ENCODE measurements at regions of chr21 and their contacts with region 1.

Region 1: GRCh38 chr21:26170471-26171257 is at the start of gene APP:
- DNase-seq: peak; percentile 90
- ATAC-seq: peak; percentile 91 to 94
- total RNA-seq, gene APP: 385 to 445 TPM

Region 2: GRCh38 chr21:25298512-25299491 is 871.9 kb before region 1 on chr21:
- intact Hi-C with region 1: no loop called
- DNase-seq: no peak
- ATAC-seq: no peak

Region 3: DNA sequence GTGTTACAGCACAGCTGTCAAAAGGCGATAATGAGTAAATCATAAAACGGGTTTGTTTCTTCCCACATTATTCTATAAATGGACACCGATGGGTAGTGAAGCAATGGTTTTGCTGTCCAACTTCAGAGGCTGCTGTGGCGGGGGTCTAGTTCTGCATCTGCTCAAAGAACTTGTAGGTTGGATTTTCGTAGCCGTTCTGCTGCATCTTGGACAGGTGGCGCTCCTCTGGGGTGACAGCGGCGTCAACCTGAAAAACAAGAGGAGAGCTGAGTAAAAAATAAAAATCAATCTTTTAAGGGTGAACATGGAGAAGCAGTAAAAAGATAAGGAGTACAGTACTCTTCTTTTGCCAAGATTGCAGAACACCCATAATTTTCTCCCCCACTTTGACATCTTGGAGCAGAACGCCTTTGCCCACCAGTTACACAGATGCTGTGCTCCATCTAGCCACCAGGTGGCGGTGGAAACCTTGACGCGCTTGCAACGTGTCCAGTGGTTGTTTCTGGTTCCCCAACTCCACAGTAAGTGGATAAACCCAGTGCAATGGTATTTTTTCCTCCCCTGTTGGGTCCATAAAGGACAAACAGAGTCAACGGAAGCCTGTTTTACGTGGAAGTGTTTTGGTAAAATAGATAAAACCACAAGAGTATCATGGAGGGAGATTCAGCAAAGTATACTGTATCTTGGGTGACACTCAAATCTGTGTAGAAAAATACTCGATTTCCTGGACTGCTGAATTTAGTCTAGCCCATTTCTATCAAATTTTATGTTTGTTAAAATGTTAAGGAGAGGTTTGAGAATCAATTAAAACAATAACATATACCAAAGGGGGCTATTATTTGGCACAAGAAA is 288.9 kb before region 1 on chr21:
- intact Hi-C with region 1: loop called in 1 of 2 experiments (anchors 5 kb)
- DNase-seq: peak; percentile 73
- ATAC-seq: peak; percentile 76 to 77

Region 4: GRCh38 chr21:25895565-25896205 is 275.0 kb before region 1 on chr21:
- intact Hi-C with region 1: loop called in 1 of 2 experiments (anchors 5 kb)
- DNase-seq: no peak
- ATAC-seq: peak; percentile 81 to 82

Region 5: DNA sequence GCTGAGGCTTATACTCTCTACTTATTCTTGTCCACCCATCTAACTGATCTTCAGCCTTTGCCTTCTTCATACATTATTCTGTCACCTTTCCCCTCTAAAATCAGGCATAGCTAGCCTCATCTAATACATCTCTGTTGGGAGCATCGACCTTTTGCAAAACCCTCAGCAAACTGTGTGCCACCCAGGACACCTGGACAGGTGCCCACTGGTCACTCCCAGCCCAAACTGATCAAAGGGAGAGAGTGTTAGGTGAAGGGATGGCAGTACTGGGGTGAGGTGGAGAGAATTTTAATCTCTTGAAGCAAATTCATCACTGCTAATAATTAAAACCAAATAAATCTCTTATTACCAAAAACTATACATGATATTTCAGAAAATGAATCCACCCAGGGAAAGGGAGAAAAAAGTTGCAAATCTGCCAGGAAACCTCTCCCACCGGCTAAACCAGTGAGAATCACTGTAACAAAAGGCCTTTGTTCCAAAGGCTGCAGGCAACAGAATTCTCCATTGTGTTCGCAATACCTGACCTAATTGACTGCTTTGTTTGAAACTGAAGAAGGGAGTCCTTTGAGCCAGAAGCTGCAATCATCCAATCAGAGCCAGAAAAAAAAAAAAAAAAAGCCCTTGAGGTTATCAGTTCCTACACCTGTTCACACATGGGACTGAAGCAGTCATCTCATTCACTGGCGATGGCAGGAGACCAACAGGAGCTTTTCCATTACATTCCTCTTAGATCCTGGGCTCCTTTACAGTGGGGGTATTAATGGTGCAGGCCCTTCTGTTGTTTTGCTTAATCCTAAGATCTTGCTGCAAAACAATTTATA is 172.7 kb before region 1 on chr21:
- intact Hi-C with region 1: no loop called
- DNase-seq: no peak
- ATAC-seq: peak in 1 of 2 donors; percentile 32

Region 6: GRCh38 chr21:26070822-26071425 is 99.7 kb before region 1 on chr21:
- intact Hi-C with region 1: loop called in 1 of 2 experiments (anchors 10 kb)
- DNase-seq: no peak
- ATAC-seq: peak; percentile 35 to 55

Region 7: GRCh38 chr21:26572702-26573381 is 402.2 kb after region 1 on chr21 and contains the start of gene CYYR1:
- intact Hi-C with region 1: loop called in 1 of 2 experiments (anchors 10 kb)
- DNase-seq: peak; percentile 29
- ATAC-seq: peak; percentile 53 to 67
- total RNA-seq, gene CYYR1: 19.9 to 27.8 TPM

Region 8: DNA sequence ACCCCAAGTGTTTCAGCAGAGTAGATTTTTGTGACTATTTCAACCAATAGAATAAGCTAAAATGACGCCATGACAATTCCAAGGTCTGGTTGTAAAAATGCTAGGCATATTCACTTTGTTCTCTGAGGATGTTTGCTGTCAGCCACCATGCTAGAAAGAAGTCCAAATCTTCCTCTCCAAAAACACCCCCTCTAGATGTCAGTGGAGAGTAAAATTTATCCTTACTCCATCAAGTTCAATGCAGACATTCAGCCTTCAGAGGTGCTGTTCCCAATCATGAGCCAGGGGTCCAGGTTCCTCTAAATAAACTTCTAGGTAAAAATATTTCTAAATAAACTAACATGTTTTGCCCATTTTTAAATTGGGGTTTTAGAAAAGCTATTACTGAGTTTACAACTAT is 1191.6 kb after region 1 on chr21:
- intact Hi-C with region 1: no loop called
- DNase-seq: no peak
- ATAC-seq: no peak